ENCODE measurements at regions of chr4 and their contacts with region 1.

Region 1: GRCh38 chr4:153344131-153345010 is at the start of gene MND1:
- DNase-seq: peak; percentile 93
- H3K4me3 Mint-ChIP-seq: peak within 1 kb of the TSS; percentile 84
- H3K27ac Mint-ChIP-seq: peak within 1 kb of the TSS; percentile 77
- H3K4me1 Mint-ChIP-seq: peaks cover 46% of the 10 kb centered on the region
- H3K27me3 Mint-ChIP-seq: peaks cover 11% of the 10 kb centered on the region
- total RNA-seq, gene MND1: 20.8 to 21.7 TPM

Region 2: GRCh38 chr4:153432968-153433753 is 88.8 kb after region 1 on chr4:
- CTCF ChIA-PET with region 1: interaction called, 26 read pairs
- POLR2A ChIA-PET with region 1: interaction called, 13 read pairs
- DNase-seq: peak; percentile 86
- H3K4me3 Mint-ChIP-seq: peak overlapping the region; percentile 78
- H3K27ac Mint-ChIP-seq: peak overlapping the region; percentile 90
- H3K4me1 Mint-ChIP-seq: peaks cover 44% of the 10 kb centered on the region
- H3K27me3 Mint-ChIP-seq: peaks cover 3% of the 10 kb centered on the region

Region 3: DNA sequence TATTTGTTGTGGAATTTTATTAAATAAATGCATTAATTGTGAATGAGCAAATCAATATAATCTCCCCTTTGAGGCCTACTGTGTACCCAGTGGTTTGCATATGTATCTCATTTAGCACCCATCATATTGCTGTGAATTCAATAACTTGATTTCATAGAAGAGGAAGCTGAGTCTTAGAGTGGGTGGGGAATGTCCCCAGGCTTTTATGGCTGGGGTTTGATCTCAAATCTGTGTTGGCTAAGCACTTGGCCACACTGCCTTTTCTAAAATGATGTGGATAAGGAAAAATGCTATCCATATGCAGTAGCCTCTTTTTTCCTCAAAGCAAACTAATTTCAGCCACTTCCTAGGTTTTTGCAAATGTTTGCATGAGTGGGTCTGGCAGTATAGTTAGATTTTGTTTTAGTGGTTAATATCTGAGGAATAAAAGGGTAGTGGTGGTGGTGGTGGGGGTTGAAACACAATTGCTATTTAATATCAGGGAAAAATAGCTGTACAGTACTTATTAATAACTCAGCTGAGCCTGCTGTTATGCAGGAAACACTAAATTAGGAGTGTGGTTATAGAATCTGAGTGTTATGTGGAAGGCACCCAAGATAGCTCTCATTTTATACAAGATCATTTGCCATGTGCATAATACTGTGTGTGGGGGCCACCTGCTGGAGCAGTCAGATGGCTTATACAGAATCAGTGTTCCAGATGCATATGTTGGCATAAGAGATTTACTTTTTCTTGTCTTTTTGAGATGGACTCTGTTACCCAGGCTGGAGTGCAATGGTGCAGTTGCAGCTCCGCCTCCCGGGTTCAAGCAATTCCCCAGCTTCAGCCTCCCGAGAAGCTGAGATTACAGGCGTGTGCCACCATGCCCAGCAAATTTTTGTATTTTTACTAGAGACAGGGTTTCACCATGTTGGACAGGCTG is 229.8 kb after region 1 on chr4:
- CTCF ChIA-PET with region 1: interaction called, 72 read pairs
- POLR2A ChIA-PET with region 1: interaction called, 20 read pairs
- DNase-seq: peak; percentile 77
- H3K4me3 Mint-ChIP-seq: no peak overlapping the region
- H3K27ac Mint-ChIP-seq: peak overlapping the region; percentile 9
- H3K4me1 Mint-ChIP-seq: peaks cover 31% of the 10 kb centered on the region
- H3K27me3 Mint-ChIP-seq: no peaks in the 10 kb centered on the region

Region 4: GRCh38 chr4:153643406-153644383 is 299.3 kb after region 1 on chr4:
- CTCF ChIA-PET with region 1: interaction called, 64 read pairs
- POLR2A ChIA-PET with region 1: interaction called, 11 read pairs
- DNase-seq: no peak
- H3K4me3 Mint-ChIP-seq: no peak overlapping the region
- H3K27ac Mint-ChIP-seq: no peak overlapping the region
- H3K4me1 Mint-ChIP-seq: peaks cover 9% of the 10 kb centered on the region
- H3K27me3 Mint-ChIP-seq: no peaks in the 10 kb centered on the region

Region 5: DNA sequence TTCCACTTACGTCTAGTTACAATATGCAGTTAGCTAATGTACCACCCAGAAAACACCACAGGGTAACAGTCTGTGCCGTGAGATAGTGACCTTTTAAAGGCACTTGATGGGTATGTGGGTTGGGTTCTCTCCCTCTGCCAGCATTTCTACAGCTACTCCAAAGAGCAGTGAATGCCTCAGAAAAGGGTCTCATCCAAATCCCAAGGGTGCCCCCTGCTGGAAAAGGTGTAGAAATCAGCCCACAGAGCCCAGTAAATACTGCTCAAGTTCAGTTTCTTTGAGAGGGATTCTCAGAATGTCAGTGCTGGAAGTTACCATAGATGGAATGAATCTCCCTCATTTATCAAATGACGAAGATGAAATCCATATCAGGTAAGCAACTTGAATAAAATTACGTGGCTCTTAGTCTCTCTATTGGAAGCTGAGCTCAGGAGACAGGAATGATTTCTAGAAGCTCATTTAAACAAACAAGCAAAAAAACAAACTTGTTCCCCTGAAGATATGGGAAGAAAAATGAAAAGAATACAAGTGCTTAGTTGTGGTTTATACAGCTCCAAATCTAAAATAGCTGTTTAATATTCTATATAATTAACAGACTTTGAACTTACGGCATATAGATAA is 405.9 kb after region 1 on chr4:
- CTCF ChIA-PET with region 1: interaction called, 10 read pairs
- POLR2A ChIA-PET with region 1: interaction called, 3 read pairs
- DNase-seq: peak; percentile 67
- H3K4me3 Mint-ChIP-seq: no peak overlapping the region
- H3K27ac Mint-ChIP-seq: no peak overlapping the region
- H3K4me1 Mint-ChIP-seq: no peaks in the 10 kb centered on the region
- H3K27me3 Mint-ChIP-seq: peaks cover 32% of the 10 kb centered on the region

Region 6: DNA sequence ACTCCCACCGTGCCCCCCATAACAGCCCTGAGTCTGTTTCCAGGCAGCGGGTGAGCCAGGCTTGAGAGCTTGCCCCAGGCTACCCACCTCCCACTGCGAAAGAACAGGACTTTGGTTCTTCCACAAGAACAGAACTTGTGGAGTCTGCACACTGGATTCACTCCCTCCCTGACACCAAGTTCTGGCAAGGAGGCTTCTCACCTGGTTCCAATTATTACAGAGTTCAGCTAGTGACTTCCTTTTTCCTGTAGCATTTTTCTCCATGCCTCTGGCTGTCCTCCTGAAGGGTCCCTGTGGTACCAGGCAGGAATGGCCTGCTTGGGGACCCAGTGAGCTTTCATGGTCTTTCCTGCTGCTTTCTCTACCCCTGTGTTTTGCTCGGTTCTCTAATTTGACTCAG is 653.1 kb after region 1 on chr4:
- CTCF ChIA-PET with region 1: no interaction called
- POLR2A ChIA-PET with region 1: no interaction called
- DNase-seq: no peak
- H3K4me3 Mint-ChIP-seq: no peak overlapping the region
- H3K27ac Mint-ChIP-seq: no peak overlapping the region
- H3K4me1 Mint-ChIP-seq: no peaks in the 10 kb centered on the region
- H3K27me3 Mint-ChIP-seq: no peaks in the 10 kb centered on the region

Measured in activated CD4-positive, alpha-beta memory T cell treated with anti-CD3 and anti-CD28 coated beads, Interleukin-2, amount 10 ng/mL, durations not matched to agents 7 days and 5 days (primary cell).